Right ventricle myocardium inferior (tissue), 1 donor: ENCODE measurements at regions of chr22 and their contacts with region 1.

Region 1: DNA sequence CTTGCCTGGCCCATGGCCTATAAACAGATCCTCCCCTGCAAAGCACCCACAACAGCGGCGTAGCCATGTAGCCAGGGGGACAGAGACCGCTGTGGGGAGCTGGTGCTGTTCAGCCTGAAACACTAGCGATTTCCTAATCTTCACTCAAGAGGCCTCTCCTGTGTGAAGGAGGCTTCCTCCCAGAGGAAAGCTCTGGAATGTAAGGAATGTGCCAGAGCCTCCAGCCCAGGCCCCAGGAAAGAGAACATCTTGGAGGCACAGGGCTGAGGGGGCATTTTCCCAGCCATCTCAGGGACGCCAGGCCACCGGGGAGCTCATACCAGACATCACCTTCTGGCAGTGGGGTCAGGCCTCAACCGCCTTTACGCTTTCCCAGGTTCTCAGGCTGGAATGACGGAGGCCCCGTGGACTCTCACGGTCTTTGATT is 24.0 kb downstream of the MIAT start:
- DNase-seq: no peak
- ATAC-seq: no peak

Region 2: DNA sequence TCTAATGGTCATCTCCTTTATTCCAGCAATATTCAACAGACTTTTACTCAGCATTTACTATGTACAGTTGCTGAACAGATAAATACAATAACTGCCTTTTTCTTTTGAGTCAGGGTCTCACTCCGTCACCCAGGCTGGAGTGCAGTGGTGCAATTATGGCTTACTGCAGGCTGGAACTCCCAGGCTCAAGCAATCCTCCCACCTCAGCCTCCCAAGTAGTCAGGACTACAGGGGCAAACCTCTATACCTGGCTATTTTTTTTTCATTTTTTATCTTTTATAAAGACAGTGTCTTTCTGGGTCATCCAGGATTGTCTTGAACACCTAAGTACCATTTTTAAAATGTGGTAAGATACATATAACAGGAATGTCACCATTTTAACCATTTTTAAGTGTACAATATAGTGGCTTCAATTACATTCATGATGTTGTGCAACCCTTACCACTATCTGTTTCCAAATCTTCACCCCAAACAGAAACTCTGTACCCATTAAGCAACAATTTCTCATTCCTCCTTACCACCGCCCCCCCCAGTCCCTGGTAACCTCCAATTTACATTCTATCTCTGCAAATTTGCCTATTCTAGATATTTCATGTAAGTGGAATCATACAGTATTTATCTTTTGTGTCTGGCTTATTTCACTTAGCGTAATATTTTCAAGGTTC is 43.7 kb after region 1 on chr22:
- intact Hi-C with region 1: loop called (anchors 2 kb)
- DNase-seq: no peak
- ATAC-seq: no peak

Region 3: DNA sequence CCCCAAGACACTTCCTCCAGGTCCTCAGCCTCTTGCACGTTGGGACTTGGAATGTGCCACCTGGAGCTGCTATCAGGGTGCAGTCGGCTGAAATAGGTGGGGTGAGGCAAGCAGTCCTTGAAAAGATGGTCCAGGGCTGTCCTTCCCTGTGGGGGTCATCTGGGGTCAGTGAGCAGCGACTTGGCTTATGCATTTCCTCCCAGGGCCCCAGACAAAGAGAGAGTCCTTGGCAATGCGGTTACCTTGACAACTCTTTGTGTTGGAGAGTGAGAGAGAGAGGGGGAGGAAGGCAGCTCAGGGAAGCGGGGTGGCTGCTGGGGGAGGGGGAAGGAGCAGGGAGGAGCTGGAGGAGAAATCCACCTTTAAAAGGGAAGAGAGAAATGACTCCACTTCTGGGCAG is 69.8 kb after region 1 on chr22:
- intact Hi-C with region 1: loop called (anchors 5 kb)
- DNase-seq: no peak
- ATAC-seq: no peak